ENCODE measurements at regions of chr11 and their contacts with region 1.

Region 1: DNA sequence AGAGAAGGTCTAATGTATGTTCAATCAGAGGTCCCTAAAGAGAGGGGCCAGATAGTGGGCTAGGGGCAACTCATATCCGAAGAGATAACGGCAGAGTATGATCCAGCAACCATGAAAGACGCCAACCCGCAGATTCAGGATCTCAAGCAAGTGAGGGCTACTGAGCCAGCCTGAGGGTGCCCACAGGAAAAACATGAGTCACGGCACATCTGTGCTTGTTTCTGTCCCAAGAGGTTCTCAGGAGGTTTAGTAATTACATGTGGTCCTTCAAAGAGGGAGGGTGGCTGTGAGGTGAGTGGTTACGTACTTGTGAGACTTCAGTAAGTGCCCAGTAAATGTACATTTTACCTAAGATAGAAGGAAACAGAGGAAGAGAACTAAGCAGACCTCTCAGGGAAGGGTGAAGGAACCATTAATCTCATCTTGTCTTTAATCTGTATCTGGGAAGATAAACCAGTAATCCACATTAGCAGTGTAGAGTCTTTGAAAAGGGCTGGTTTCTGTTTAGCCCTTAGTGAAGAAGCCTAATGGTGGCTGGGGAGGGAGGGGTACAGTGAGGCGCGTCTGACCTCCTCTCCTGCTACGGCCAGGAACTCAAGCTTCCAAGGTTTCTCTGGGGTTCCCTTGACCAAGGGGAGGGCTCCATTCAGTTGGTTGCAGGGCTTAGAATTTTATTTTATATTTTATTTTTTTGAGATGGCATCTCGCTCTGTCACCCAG is 10.2 kb downstream of the SIRT3 start:
- DNase-seq: no peak
- H3K4me3 Mint-ChIP-seq: no peak overlapping the region
- H3K27ac Mint-ChIP-seq: no peak overlapping the region
- H3K4me1 Mint-ChIP-seq: peaks cover 5% of the 10 kb centered on the region
- H3K27me3 Mint-ChIP-seq: no peaks in the 10 kb centered on the region

Region 2: GRCh38 chr11:196786-197719 is 28.8 kb before region 1 on chr11:
- CTCF ChIA-PET with region 1: no interaction called
- POLR2A ChIA-PET with region 1: no interaction called
- DNase-seq: peak; percentile 5
- H3K4me3 Mint-ChIP-seq: no peak overlapping the region
- H3K27ac Mint-ChIP-seq: no peak overlapping the region
- H3K4me1 Mint-ChIP-seq: peaks cover 13% of the 10 kb centered on the region
- H3K27me3 Mint-ChIP-seq: no peaks in the 10 kb centered on the region

Region 3: DNA sequence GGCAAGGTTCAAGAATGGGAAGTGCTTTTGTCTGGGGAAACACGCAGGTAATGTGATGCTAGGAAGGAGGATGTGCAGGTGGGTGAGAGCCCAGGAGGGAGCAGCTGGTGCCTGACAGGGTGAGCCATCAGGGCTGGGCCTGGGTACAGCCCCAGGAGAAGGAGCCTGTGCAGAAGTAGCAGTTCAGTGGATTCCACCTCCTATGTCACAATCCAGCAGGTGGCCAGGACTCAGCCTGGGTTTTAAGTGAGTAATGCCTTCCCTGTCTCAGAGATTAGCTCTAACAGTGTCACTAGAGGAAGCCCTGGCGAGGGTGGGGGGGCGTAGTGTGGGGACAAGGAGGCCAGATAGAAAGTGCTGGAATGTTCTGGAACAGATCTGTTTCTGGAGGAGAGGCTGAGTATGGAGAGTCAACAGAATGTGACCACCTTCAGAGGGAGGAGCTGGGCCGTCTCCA is 10.3 kb before region 1 on chr11:
- CTCF ChIA-PET with region 1: interaction called, 13 read pairs
- POLR2A ChIA-PET with region 1: no interaction called
- DNase-seq: no peak
- H3K4me3 Mint-ChIP-seq: no peak overlapping the region
- H3K27ac Mint-ChIP-seq: no peak overlapping the region
- H3K4me1 Mint-ChIP-seq: peaks cover 11% of the 10 kb centered on the region
- H3K27me3 Mint-ChIP-seq: no peaks in the 10 kb centered on the region

Measured in activated CD4-positive, alpha-beta T cell treated with anti-CD3 and anti-CD28 coated beads, Interleukin-2, amount 10 ng/mL, durations not matched to agents 7 days and 5 days (primary cell).